WTC11 (cell line): ENCODE measurements at regions of chr17 and their contacts with region 1.

Region 1: DNA sequence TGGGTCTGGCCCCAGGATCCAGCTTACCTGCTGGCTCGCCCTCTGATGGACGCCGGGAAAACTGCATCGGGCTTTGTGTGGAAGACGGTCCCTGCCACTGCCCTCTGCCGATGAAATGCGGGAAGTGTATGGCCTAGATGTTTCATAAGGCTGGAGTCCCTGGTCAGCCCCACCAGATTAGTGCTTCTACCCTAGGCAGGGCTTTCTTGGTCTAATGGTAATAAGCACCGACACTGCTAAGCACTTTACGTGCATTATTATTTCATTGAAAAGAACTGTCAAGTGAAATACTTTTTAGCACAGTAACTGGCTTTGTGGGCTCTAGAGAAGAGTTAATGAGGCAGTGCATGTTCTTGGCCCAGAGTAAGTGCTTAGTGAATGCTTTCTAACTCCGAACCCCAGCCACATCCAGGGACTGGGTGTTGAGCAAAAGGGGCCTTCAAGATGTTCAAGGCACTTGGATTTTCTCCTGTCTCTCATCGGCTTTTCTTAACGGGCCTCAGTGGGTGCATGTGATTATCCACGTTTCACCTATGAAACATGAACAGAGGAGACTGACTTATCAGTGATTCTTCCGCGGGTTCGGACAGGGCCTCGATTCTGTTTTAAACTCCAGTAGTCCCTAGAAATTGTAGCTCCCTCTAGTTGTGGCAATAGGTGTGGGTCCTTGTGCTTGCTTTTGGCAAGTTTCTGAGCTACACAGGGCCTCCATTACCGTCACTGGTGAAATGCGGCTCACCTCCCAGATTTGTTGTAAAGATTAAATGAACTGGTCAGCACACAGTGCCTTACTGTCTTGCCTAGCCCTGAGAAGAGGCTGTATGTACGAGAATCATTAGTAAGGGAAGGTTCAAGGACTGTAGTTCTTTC is 6.6 kb downstream of the TRAF4 start:
- DNase-seq: peak; percentile 96
- ATAC-seq: peak; percentile 57
- H3K4me3 Mint-ChIP-seq: no peak overlapping the region
- H3K27ac Mint-ChIP-seq: peak overlapping the region; percentile 54
- H3K4me1 Mint-ChIP-seq: peaks cover 47% of the 10 kb centered on the region
- H3K27me3 Mint-ChIP-seq: no peaks in the 10 kb centered on the region
- CTCF ChIP-seq: peak; percentile 88

Region 2: GRCh38 chr17:28384281-28385036 is 366.0 kb before region 1 on chr17:
- CTCF ChIA-PET with region 1: no interaction called
- POLR2A ChIA-PET with region 1: no interaction called
- DNase-seq: peak; percentile 53
- ATAC-seq: peak; percentile 52
- H3K4me3 Mint-ChIP-seq: peak overlapping the region; percentile 89
- H3K27ac Mint-ChIP-seq: no peak overlapping the region
- H3K4me1 Mint-ChIP-seq: peaks cover 11% of the 10 kb centered on the region
- H3K27me3 Mint-ChIP-seq: peaks cover 83% of the 10 kb centered on the region
- CTCF ChIP-seq: no peak

Region 3: GRCh38 chr17:28717578-28718333 is 32.7 kb before region 1 on chr17 and contains the start of gene RAB34:
- CTCF ChIA-PET with region 1: interaction called, 13 read pairs
- POLR2A ChIA-PET with region 1: interaction called, 27 read pairs
- DNase-seq: peak; percentile 96
- ATAC-seq: peak; percentile 71
- H3K4me3 Mint-ChIP-seq: peak within 1 kb of the TSS; percentile 100
- H3K27ac Mint-ChIP-seq: peak within 1 kb of the TSS; percentile 97
- H3K4me1 Mint-ChIP-seq: peaks cover 47% of the 10 kb centered on the region
- H3K27me3 Mint-ChIP-seq: no peaks in the 10 kb centered on the region
- CTCF ChIP-seq: no peak
- total RNA-seq, gene RAB34: 153 to 181 TPM (median 162 TPM) in 3 replicates

Region 4: GRCh38 chr17:28842282-28843012 is 92.0 kb after region 1 on chr17 and contains the start of gene FAM222B:
- CTCF ChIA-PET with region 1: interaction called, 10 read pairs
- POLR2A ChIA-PET with region 1: no interaction called
- DNase-seq: peak; percentile 89
- ATAC-seq: peak; percentile 99
- H3K4me3 Mint-ChIP-seq: peak within 1 kb of the TSS; percentile 96
- H3K27ac Mint-ChIP-seq: peak within 1 kb of the TSS; percentile 95
- H3K4me1 Mint-ChIP-seq: peaks cover 15% of the 10 kb centered on the region
- H3K27me3 Mint-ChIP-seq: no peaks in the 10 kb centered on the region
- CTCF ChIP-seq: no peak
- total RNA-seq, gene FAM222B: 86.6 to 94.6 TPM (median 91.5 TPM) in 3 replicates

Region 5: GRCh38 chr17:28861393-28862203 is 111.2 kb after region 1 on chr17:
- CTCF ChIA-PET with region 1: interaction called, 12 read pairs
- POLR2A ChIA-PET with region 1: no interaction called
- DNase-seq: peak; percentile 39
- ATAC-seq: peak; percentile 77
- H3K4me3 Mint-ChIP-seq: no peak overlapping the region; the same call in 1 of the 2 replicates
- H3K27ac Mint-ChIP-seq: peak overlapping the region; percentile 88; the same call in 1 of the 2 replicates
- H3K4me1 Mint-ChIP-seq: peaks cover 17% of the 10 kb centered on the region
- H3K27me3 Mint-ChIP-seq: no peaks in the 10 kb centered on the region
- CTCF ChIP-seq: no peak

Region 6: GRCh38 chr17:28878981-28879380 is 128.6 kb after region 1 on chr17:
- CTCF ChIA-PET with region 1: interaction called, 20 read pairs
- POLR2A ChIA-PET with region 1: no interaction called
- DNase-seq: peak; percentile 80
- ATAC-seq: peak; percentile 98
- H3K4me3 Mint-ChIP-seq: no peak overlapping the region
- H3K27ac Mint-ChIP-seq: peak overlapping the region; percentile 18; the same call in 1 of the 2 replicates
- H3K4me1 Mint-ChIP-seq: peaks cover 6% of the 10 kb centered on the region; the same call in 1 of the 2 replicates
- H3K27me3 Mint-ChIP-seq: peaks cover 7% of the 10 kb centered on the region
- CTCF ChIP-seq: peak; percentile 31; the same call in 1 of the 2 replicates